HEK293 (cell line): ENCODE measurements at regions of chr1 and their contacts with region 1.

Region 1: GRCh38 chr1:16187748-16188401 is 24.6 kb downstream of the ARHGEF19 start:
- H3K4me3 ChIP-seq: no peak overlapping the region
- H3K27ac ChIP-seq: no peak overlapping the region
- H3K4me1 ChIP-seq: no peaks in the 10 kb centered on the region
- CTCF ChIP-seq: peak; percentile 94

Region 2: GRCh38 chr1:16073490-16074119 is 114.3 kb before region 1 on chr1 and contains the start of gene FAM131C:
- CTCF ChIA-PET with region 1: interaction called, 427 read pairs
- POLR2A ChIA-PET with region 1: no interaction called
- H3K4me3 ChIP-seq: peak within 1 kb of the TSS; percentile 40
- H3K27ac ChIP-seq: no peak within 1 kb of the TSS; the same call in 1 of the 2 replicates
- H3K4me1 ChIP-seq: no peaks in the 10 kb centered on the region
- CTCF ChIP-seq: no peak

Region 3: DNA sequence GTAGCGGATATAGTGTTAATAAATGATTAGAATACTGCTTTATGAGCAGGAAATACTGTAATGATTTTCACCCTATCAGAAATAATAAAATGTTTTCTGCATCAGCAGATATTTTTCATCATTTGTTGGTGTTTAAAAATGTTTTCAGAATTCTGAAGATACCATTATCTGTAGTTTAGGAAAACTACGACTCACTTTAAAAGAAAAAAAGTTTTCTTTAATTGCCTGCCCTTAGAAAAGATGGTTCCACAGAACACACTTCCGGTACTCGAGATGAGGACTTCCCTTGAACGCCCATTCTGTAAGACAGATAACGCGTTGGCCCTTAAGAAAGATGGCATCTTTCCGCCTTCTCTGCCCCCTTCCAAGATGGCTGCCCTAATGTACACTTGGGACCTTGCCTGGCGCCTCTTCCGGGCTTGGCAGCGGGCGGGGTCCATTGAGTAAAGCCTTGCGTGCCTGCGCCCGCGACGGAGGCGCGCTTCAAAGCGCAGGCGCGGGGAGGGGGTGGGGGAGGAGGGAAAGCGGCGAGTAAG is 178.9 kb after region 1 on chr1 and contains the start of gene SZRD1:
- CTCF ChIA-PET with region 1: interaction called, 16 read pairs
- POLR2A ChIA-PET with region 1: no interaction called
- H3K4me3 ChIP-seq: peak within 1 kb of the TSS; percentile 97
- H3K27ac ChIP-seq: peak within 1 kb of the TSS; percentile 93
- H3K4me1 ChIP-seq: peaks cover 9% of the 10 kb centered on the region
- CTCF ChIP-seq: no peak